Naive thymus-derived CD4-positive, alpha-beta T cell (primary cell): ENCODE measurements at regions of chrX and their contacts with region 1.

Region 1: DNA sequence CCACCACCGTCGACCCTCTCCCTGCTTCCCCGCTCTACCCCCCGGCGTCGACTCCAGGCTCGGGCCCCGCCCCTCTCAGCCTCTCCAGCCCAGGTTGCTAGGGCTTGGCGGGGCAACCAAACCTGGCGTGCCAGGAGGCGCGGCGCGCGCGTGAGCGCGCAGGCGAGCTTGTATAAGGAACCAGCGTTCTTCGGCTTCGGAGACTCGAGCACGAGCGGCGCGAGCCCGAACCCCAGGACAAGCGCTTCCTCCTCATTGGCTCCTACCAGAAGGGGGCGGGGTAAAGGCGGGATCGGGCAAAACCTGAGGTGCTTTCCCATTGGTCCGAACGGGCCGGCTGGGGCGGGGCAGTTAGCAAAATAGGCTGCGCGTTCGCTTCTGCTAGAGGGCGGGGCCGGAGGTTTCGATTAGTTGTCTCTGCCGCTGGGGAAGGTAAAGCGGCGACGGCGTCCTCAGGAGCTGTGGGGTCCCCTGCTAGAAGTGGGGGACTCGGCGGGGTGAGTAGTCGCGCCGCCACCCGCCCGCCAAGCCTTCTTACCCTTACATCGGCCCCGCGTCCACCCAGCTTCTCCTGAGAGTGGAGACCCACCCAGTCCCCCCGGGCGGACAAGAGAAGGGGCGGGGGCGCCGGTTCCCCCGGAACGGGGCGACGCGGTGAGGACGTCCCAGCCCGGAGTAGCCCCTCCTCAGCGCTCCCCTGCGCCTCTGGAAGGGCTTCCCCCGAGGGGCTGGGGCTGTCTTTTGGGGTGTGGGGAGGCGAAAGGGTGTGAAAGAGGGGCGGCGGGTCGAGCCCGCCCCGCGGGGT is at the start of gene CDKL5:
- DNase-seq: peak; percentile 83 to 98 (median 96)
- ATAC-seq: peak; percentile 97
- H3K4me3 ChIP-seq: peak within 1 kb of the TSS; percentile 77
- H3K4me3 Mint-ChIP-seq: peak within 1 kb of the TSS; percentile 85 to 95 (median 89)
- H3K27ac ChIP-seq: peak within 1 kb of the TSS; percentile 93
- H3K27ac Mint-ChIP-seq: peak within 1 kb of the TSS; percentile 71 to 92 (median 91)
- H3K4me1 ChIP-seq: peaks cover 0 to 5% of the 10 kb centered on the region in 2 donors
- H3K4me1 Mint-ChIP-seq: peaks cover 5 to 25% (median 13%) of the 10 kb centered on the region in 7 donors
- H3K27me3 ChIP-seq: no peaks in the 10 kb centered on the region
- H3K27me3 Mint-ChIP-seq: peaks cover 0 to 25% (median 0%) of the 10 kb centered on the region in 5 donors
- total RNA-seq, gene CDKL5: 1.2 to 7.0 (median 5.8) TPM

Region 2: GRCh38 chrX:16946361-16946964 is 1478.9 kb before region 1 on chrX and contains the start of gene REPS2:
- CTCF ChIA-PET with region 1: no interaction called
- POLR2A ChIA-PET with region 1: no interaction called
- intact Hi-C with region 1: loop called in 1 of 2 experiments (anchors 2 kb)
- DNase-seq: peak; percentile 51 to 82 (median 70)
- ATAC-seq: peak; percentile 98
- H3K4me3 ChIP-seq: peak within 1 kb of the TSS; percentile 39
- H3K4me3 Mint-ChIP-seq: peak within 1 kb of the TSS; percentile 77 to 88 (median 84)
- H3K27ac ChIP-seq: peak within 1 kb of the TSS; percentile 7
- H3K27ac Mint-ChIP-seq: peak within 1 kb of the TSS in 7 of 9 donors; percentile 51 to 86 (median 73)
- H3K4me1 ChIP-seq: no peaks in the 10 kb centered on the region
- H3K4me1 Mint-ChIP-seq: peaks cover 0 to 4% (median 0%) of the 10 kb centered on the region in 7 donors
- H3K27me3 ChIP-seq: no peaks in the 10 kb centered on the region
- H3K27me3 Mint-ChIP-seq: peaks cover 3 to 25% (median 6%) of the 10 kb centered on the region in 5 donors
- total RNA-seq, gene REPS2: 1.1 to 6.2 (median 1.9) TPM in 4 of 5 experiments, not detected in the other

Region 3: DNA sequence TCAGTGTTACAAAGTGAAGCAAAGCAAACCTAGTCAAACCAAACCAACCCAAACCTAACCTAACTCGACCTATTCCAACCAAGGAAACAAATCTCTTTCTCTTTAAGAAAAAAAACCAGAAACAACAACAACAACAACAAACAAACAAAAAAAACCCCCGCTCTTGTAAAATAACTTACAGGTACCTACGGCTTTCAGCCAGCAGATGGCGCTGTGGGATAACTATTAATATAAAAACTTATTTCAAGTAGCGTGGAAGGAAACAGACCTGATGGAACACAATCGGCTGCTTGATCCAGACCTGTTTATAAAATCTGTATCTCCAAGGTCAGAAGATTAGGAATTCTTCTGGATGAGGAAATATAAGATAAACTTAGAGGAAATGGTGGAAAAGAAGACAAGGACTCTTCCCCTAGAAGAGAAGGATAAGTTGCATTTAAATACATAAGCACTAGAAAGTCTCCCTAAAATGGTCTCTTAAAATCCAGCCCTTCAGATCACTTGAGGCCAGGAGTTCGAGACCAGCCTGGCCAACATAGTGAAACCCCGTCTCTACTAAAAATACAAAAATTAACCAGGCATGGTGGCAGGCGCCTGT is 34.4 kb before region 1 on chrX:
- CTCF ChIA-PET with region 1: no interaction called
- POLR2A ChIA-PET with region 1: no interaction called
- intact Hi-C with region 1: loop called (anchors 2 kb)
- DNase-seq: peak; percentile 12 to 69 (median 60)
- ATAC-seq: peak; percentile 60
- H3K4me3 ChIP-seq: no peak overlapping the region
- H3K4me3 Mint-ChIP-seq: no peak overlapping the region
- H3K27ac ChIP-seq: no peak overlapping the region
- H3K27ac Mint-ChIP-seq: peak overlapping the region in 2 of 9 donors; percentile 2 to 19
- H3K4me1 ChIP-seq: no peaks in the 10 kb centered on the region
- H3K4me1 Mint-ChIP-seq: peaks cover 0 to 6% (median 5%) of the 10 kb centered on the region in 7 donors
- H3K27me3 ChIP-seq: no peaks in the 10 kb centered on the region
- H3K27me3 Mint-ChIP-seq: no peaks in the 10 kb centered on the region

Region 4: GRCh38 chrX:18984381-18985185 is 559.2 kb after region 1 on chrX:
- CTCF ChIA-PET with region 1: no interaction called
- POLR2A ChIA-PET with region 1: no interaction called
- intact Hi-C with region 1: loop called (anchors 1 kb)
- DNase-seq: peak; percentile 72 to 90 (median 85)
- ATAC-seq: peak; percentile 95
- H3K4me3 ChIP-seq: peak overlapping the region; percentile 59
- H3K4me3 Mint-ChIP-seq: peak overlapping the region; percentile 77 to 92 (median 86)
- H3K27ac ChIP-seq: peak overlapping the region; percentile 96
- H3K27ac Mint-ChIP-seq: peak overlapping the region; percentile 86 to 98 (median 95)
- H3K4me1 ChIP-seq: peaks cover 3 to 17% of the 10 kb centered on the region in 2 donors
- H3K4me1 Mint-ChIP-seq: peaks cover 5 to 25% (median 10%) of the 10 kb centered on the region in 7 donors
- H3K27me3 ChIP-seq: no peaks in the 10 kb centered on the region
- H3K27me3 Mint-ChIP-seq: no peaks in the 10 kb centered on the region

Region 5: DNA sequence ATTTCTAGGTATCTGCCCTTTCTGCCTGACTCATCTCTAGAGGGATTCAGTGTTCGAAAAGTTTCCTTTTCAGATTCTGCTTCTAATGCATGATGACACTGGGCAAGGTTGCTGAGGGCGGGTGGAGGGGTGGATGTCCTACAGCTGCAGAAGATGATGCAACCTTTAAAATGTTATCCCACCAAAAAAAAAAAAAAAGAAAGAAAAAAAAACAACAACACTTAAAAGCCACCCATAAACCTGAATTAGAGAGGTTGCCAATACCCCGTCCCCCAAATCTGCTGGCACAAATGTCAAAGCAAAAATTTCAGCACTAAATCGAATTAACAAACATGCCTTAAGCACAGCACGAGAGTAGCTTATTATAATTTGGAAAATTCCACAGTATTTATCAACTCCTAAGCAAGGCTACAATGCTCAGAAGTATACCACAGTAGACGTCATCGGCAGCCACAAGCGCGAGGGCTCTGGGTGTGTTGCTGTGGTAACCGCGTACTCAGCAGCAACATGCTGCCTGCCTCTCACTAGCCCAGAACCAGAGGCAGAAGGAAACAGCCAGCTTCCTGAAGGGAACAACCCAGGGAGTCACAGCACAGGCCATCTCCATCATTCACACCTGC is 1257.4 kb after region 1 on chrX:
- CTCF ChIA-PET with region 1: no interaction called
- POLR2A ChIA-PET with region 1: no interaction called
- intact Hi-C with region 1: loop called (anchors 5 to 10 kb)
- DNase-seq: peak; percentile 24 to 88 (median 81)
- ATAC-seq: peak; percentile 97
- H3K4me3 ChIP-seq: no peak overlapping the region
- H3K4me3 Mint-ChIP-seq: peak overlapping the region in 9 of 10 donors; percentile 4 to 85 (median 67)
- H3K27ac ChIP-seq: peak overlapping the region; percentile 81
- H3K27ac Mint-ChIP-seq: peak overlapping the region; percentile 85 to 100 (median 98)
- H3K4me1 ChIP-seq: peaks cover 30 to 37% of the 10 kb centered on the region in 2 donors
- H3K4me1 Mint-ChIP-seq: peaks cover 43 to 88% (median 82%) of the 10 kb centered on the region in 7 donors
- H3K27me3 ChIP-seq: no peaks in the 10 kb centered on the region
- H3K27me3 Mint-ChIP-seq: no peaks in the 10 kb centered on the region